Dorsolateral prefrontal cortex (tissue), 120 donors: ENCODE measurements at regions of chr3 and their contacts with region 1.

Region 1: DNA sequence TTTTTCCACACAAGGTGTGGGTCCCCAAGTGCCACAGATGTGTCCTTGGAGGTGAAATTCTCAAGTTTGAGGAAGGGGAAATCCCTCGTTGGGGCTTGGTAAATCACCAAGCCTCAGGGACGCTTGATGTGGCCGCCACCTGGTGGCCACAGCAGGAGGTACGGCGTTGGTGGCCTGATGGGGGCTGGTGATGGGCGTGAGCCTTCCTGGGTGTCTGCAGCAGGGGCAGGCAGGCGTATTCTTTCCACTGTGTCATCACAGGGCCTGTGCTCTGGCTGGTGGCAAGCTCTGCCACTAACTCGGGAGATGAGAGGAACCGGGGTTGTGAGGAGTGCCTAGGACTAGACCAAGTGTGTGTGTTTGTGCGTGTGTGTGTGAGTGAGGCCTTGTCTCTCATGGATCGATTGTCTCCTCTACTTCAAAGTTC is 4.2 kb downstream of the ACOX2 start:
- DNase-seq: peak in 8 of 10 donors; percentile 68 to 82 (median 72)
- H3K4me3 ChIP-seq: no peak overlapping the region
- H3K27ac ChIP-seq: no peak overlapping the region
- H3K27me3 ChIP-seq: no peaks in the 10 kb centered on the region
- CTCF ChIP-seq: peak; percentile 77 to 99 (median 95)

Region 2: GRCh38 chr3:58217209-58217811 is 315.5 kb before region 1 on chr3:
- intact Hi-C with region 1: loop called in 1 of 2 experiments (anchors 10 kb)
- DNase-seq: peak; percentile 41 to 80 (median 70)
- H3K4me3 ChIP-seq: peak overlapping the region in 25 of 59 donors; percentile 4 to 45 (median 24)
- H3K27ac ChIP-seq: peak overlapping the region in 44 of 59 donors; percentile 1 to 76 (median 46)
- H3K27me3 ChIP-seq: no peaks in the 10 kb centered on the region
- CTCF ChIP-seq: peak in 55 of 56 donors; percentile 4 to 88 (median 70)

Region 3: GRCh38 chr3:58324391-58325390 is 208.1 kb before region 1 on chr3:
- intact Hi-C with region 1: loop called in 1 of 2 experiments (anchors 5 kb)
- DNase-seq: no peak
- H3K4me3 ChIP-seq: no peak overlapping the region
- H3K27ac ChIP-seq: peak overlapping the region in 29 of 59 donors; percentile 1 to 65 (median 26)
- H3K27me3 ChIP-seq: no peaks in the 10 kb centered on the region
- CTCF ChIP-seq: no peak

Region 4: GRCh38 chr3:58419780-58420507 is 112.9 kb before region 1 on chr3:
- intact Hi-C with region 1: loop called in 1 of 2 experiments (anchors 10 kb)
- DNase-seq: no peak
- H3K4me3 ChIP-seq: no peak overlapping the region
- H3K27ac ChIP-seq: peak overlapping the region in 45 of 59 donors; percentile 1 to 85 (median 46)
- H3K27me3 ChIP-seq: no peaks in the 10 kb centered on the region
- CTCF ChIP-seq: no peak

Region 5: DNA sequence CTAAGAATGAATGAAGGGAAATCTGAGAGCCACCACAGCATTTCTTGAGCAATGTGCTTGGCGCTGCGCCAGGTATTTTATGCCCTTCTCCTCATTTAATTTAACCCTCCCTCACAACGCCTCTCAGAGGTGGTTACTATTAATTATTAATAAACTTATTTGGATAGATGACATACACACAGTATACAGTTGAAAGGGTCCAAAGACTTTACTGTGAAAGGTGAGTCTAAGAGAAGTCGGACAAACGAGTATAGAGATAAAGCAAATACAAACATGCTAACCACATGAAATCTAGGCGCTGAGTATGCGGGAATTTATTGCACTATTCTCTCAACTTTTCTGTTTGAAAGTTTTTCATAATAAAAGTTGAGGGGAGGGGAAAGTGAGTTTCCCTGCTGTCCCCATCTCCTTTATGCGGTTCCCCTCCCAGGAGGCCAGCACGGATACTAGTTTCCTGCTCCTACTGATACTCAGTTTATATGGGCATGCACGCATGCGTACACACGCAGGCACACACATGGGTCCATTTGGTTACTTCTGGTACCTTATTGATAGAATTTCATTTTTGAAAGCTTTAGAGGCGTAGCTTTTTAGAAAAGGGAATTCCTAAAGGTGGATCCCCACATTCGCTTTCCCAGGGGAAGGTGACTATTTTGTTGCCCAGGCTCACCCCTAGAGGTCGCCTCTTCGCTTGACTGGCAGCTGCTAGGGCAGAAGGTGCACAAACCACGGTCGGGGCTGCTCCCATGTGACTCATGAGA is 69.4 kb before region 1 on chr3:
- intact Hi-C with region 1: loop called (anchors 2 kb)
- DNase-seq: peak; percentile 50 to 82 (median 72)
- H3K4me3 ChIP-seq: peak overlapping the region in 47 of 59 donors; percentile 5 to 50 (median 28)
- H3K27ac ChIP-seq: peak overlapping the region in 12 of 59 donors; percentile 6 to 68 (median 32)
- H3K27me3 ChIP-seq: no peaks in the 10 kb centered on the region
- CTCF ChIP-seq: peak; percentile 53 to 88 (median 77)